Cardiac septum (tissue), 1 donor: ENCODE measurements at regions of chr1 and their contacts with region 1.

Region 1: GRCh38 chr1:27365372-27366112 is 1.2 kb downstream of the MAP3K6 start:
- DNase-seq: peak; percentile 97

Region 2: GRCh38 chr1:27321813-27322577 is 43.5 kb before region 1 on chr1 and contains the start of gene TMEM222:
- intact Hi-C with region 1: loop called (anchors 5 kb)
- DNase-seq: peak; percentile 99
- total RNA-seq, gene TMEM222: 26.8 TPM